ENCODE measurements at regions of chr2 and their contacts with region 1.

Region 1: GRCh38 chr2:171798252-171798741 is 95.7 kb downstream of the SLC25A12 start:
- DNase-seq: no peak
- H3K4me3 ChIP-seq: no peak overlapping the region
- H3K27ac ChIP-seq: no peak overlapping the region
- H3K4me1 ChIP-seq: no peaks in the 10 kb centered on the region
- H3K27me3 ChIP-seq: no peaks in the 10 kb centered on the region
- CTCF ChIP-seq: no peak
- EP300 ChIP-seq: no peak
- POLR2A ChIP-seq: no peak

Region 2: GRCh38 chr2:171762879-171763573 is 35.3 kb before region 1 on chr2:
- intact Hi-C with region 1: no loop called
- DNase-seq: no peak
- H3K4me3 ChIP-seq: no peak overlapping the region
- H3K27ac ChIP-seq: no peak overlapping the region
- H3K4me1 ChIP-seq: no peaks in the 10 kb centered on the region
- H3K27me3 ChIP-seq: no peaks in the 10 kb centered on the region
- CTCF ChIP-seq: no peak
- EP300 ChIP-seq: no peak
- POLR2A ChIP-seq: no peak

Region 3: DNA sequence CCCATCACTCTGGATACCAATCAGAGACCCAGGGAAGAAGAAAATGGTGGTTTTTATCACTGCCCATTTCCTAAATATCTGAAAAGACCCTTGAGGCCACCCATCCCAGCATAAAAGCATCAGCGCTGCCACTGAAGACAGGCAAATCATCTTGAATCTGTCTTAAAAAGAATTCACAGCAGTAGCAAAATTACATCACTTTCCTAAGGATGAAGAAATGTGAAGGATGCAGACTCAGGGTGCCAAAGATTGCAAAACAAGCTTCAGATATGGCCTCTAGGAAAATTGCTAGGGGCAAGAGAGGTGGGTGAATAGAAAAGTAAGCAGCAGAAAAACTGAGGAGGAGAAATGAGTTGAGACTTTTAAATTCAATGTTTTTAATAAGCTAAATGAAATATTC is 25.8 kb after region 1 on chr2:
- intact Hi-C with region 1: loop called in 1 of 4 experiments (anchors 2 kb)
- DNase-seq: no peak
- H3K4me3 ChIP-seq: no peak overlapping the region
- H3K27ac ChIP-seq: no peak overlapping the region
- H3K4me1 ChIP-seq: no peaks in the 10 kb centered on the region
- H3K27me3 ChIP-seq: no peaks in the 10 kb centered on the region
- CTCF ChIP-seq: no peak
- EP300 ChIP-seq: no peak
- POLR2A ChIP-seq: no peak

Measured in ovary (tissue), 10 donors.